ENCODE measurements at regions of chr20 and their contacts with region 1.

Region 1: DNA sequence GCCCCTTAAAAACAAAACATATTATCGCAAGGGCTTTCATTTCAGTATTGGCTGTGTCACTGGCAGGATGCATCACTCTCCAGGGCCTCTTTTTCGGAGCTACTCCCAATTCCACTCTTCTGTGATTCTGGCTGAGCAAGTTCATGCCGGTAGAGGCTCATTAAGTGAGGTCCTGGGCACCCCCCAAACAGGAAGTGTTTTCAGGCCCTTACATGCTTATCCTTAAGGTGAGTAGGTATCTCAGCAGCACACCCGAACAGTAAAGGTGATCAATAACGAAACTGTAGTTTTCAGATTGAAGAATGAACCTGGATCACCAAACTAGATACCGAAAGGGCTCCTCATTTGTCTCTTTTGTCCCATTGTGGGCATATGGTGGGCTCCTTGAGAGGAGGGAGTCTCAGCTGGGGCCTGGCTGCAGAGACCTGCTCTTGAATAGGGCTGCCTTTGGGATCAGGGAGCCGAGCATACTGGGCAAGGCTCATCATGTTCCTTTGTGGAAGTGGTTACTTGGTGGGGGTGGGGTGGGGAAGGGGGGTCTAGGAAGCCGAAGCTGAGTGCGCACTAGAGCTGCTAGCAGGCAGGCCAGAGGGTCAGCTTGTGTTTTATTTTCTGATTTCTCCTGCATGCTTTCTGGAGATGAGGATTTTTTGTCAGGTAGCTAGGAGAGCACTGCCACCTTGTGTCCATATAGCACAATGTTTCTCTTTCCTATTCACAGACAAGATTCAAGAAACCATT is 65.2 kb downstream of the CDS2 start:
- DNase-seq: peak; percentile 79
- H3K27ac ChIP-seq: peak overlapping the region; percentile 83
- CTCF ChIP-seq: peak; percentile 89

Region 2: GRCh38 chr20:5090191-5090590 is 101.8 kb before region 1 on chr20:
- CTCF ChIA-PET with region 1: no interaction called
- POLR2A ChIA-PET with region 1: no interaction called
- DNase-seq: no peak
- H3K27ac ChIP-seq: no peak overlapping the region
- CTCF ChIP-seq: no peak

Region 3: GRCh38 chr20:5126512-5127203 is 65.3 kb before region 1 on chr20 and contains the start of gene CDS2:
- CTCF ChIA-PET with region 1: interaction called, 35 read pairs
- POLR2A ChIA-PET with region 1: interaction called, 10 read pairs
- DNase-seq: peak; percentile 99
- H3K27ac ChIP-seq: peak within 1 kb of the TSS; percentile 87
- CTCF ChIP-seq: peak; percentile 91

Region 4: DNA sequence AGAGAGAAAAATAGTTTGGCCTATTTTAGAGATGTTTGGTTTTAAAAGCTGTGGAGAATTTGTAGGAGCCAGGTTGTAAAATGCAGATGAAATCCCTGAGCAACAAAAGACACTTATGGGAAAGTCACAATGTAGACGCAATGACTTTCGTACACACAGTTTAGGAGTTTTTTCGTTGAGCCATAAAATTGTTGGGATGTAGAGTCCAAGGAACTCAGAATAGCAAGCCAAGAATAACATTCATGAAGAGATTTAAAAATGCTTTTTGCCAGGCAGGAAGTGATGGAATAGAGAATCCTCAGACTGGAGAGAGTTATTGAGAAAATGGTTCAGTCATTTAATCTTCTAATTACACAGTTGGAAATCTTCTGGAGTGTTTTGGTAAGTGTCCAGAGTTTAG is 136.3 kb after region 1 on chr20:
- CTCF ChIA-PET with region 1: no interaction called
- POLR2A ChIA-PET with region 1: no interaction called
- DNase-seq: no peak
- H3K27ac ChIP-seq: no peak overlapping the region
- CTCF ChIP-seq: no peak